ENCODE measurements at regions of chr1 and their contacts with region 1.

Region 1: GRCh38 chr1:19485362-19486187 is at the start of gene CAPZB:
- DNase-seq: peak; percentile 87
- H3K4me3 Mint-ChIP-seq: peak within 1 kb of the TSS; percentile 96
- H3K27ac Mint-ChIP-seq: peak within 1 kb of the TSS; percentile 89
- H3K4me1 Mint-ChIP-seq: peaks cover 54% of the 10 kb centered on the region
- H3K27me3 Mint-ChIP-seq: no peaks in the 10 kb centered on the region
- total RNA-seq, gene CAPZB: 329 and 336 TPM in 2 replicates

Region 2: GRCh38 chr1:19390901-19391595 is 94.5 kb before region 1 on chr1:
- intact Hi-C with region 1: loop called (anchors 2 kb)
- DNase-seq: peak; percentile 67
- H3K4me3 Mint-ChIP-seq: peak overlapping the region; percentile 69
- H3K27ac Mint-ChIP-seq: peak overlapping the region; percentile 91
- H3K4me1 Mint-ChIP-seq: peaks cover 57% of the 10 kb centered on the region
- H3K27me3 Mint-ChIP-seq: no peaks in the 10 kb centered on the region

Region 3: GRCh38 chr1:19448491-19449439 is 36.8 kb before region 1 on chr1:
- intact Hi-C with region 1: loop called (anchors 5 kb)
- DNase-seq: no peak
- H3K4me3 Mint-ChIP-seq: no peak overlapping the region
- H3K27ac Mint-ChIP-seq: peak overlapping the region; percentile 85
- H3K4me1 Mint-ChIP-seq: peaks cover 64% of the 10 kb centered on the region
- H3K27me3 Mint-ChIP-seq: no peaks in the 10 kb centered on the region

Region 4: GRCh38 chr1:19468397-19468956 is 17.1 kb before region 1 on chr1:
- intact Hi-C with region 1: loop called (anchors 2 kb)
- DNase-seq: peak; percentile 58
- H3K4me3 Mint-ChIP-seq: peak overlapping the region; percentile 52
- H3K27ac Mint-ChIP-seq: peak overlapping the region; percentile 90
- H3K4me1 Mint-ChIP-seq: peaks cover 82% of the 10 kb centered on the region
- H3K27me3 Mint-ChIP-seq: no peaks in the 10 kb centered on the region

Region 5: GRCh38 chr1:19582302-19582701 is 96.7 kb after region 1 on chr1:
- intact Hi-C with region 1: loop called (anchors 1 kb)
- DNase-seq: peak; percentile 63
- H3K4me3 Mint-ChIP-seq: no peak overlapping the region
- H3K27ac Mint-ChIP-seq: no peak overlapping the region
- H3K4me1 Mint-ChIP-seq: peaks cover 11% of the 10 kb centered on the region
- H3K27me3 Mint-ChIP-seq: peaks cover 8% of the 10 kb centered on the region

Region 6: DNA sequence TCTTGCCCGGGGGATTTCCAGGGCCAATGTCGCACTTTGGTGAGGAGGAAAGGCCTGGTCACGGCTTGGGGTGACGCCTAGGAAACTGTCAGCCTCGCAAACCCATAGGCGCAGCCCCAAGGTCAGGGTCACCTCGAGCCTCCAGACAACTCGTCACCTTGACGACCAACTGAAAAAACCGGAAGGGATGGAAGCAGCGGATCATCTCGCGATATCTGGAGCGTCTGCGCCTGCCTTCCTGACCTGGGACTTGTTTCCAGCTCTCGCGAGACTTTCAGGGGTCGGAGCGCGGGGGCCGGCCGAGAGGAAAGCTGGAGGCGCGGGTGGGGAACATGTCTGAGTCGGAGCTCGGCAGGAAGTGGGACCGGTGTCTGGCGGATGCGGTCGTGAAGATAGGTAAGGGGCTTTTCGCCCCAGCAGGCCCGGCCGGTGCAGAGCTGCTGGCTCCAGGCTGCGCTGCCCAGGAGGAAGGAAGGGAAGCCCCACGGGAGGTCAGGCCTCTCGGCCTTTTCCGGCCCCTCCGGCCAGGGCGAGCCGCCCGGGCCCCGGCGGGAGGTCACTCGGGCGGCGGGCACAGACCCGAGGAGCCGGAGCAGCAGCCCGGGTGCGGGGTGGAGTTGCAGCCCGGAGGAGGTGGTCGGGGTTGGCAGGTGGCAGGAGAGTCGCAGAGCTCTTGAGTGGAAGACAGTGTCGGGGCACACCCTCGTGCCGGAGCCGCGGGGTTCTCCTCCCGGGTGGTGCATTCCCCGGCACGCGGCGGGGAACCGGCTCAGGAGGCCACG is 111.3 kb after region 1 on chr1:
- intact Hi-C with region 1: loop called (anchors 2 kb)
- DNase-seq: peak; percentile 97
- H3K4me3 Mint-ChIP-seq: peak overlapping the region; percentile 98
- H3K27ac Mint-ChIP-seq: peak overlapping the region; percentile 99
- H3K4me1 Mint-ChIP-seq: peaks cover 37% of the 10 kb centered on the region
- H3K27me3 Mint-ChIP-seq: peaks cover 3% of the 10 kb centered on the region

Region 7: DNA sequence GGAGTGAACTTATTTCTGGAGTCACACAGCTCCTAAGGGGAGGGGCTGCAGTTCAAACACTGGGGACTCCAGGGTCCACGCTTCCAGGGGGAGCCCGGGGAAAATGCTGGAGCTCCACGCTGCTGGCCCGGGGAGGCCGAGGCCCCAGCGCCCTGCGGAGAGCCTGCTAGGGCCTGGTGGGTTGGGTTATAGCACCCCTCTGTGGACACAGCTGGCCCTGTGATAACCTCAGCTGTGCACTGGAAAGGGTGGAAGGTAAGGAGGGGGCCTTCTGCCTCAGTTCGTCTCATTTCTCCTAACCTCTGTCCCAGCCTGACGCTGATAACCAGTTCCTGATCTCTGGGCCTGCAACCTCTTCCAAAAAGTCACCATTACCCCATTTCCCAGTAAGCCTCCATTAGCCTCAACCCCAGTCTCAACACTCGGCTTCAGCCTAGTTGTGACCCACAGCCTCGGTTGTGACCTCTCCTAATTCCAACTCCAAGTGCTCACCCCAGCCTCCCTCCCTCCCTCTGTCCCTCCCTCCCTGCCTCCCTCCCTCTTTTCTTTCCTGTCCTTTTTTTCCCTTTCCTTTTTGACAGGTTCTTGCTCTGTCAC is 165.7 kb after region 1 on chr1:
- intact Hi-C with region 1: loop called (anchors 5 kb)
- DNase-seq: peak; percentile 41
- H3K4me3 Mint-ChIP-seq: no peak overlapping the region
- H3K27ac Mint-ChIP-seq: no peak overlapping the region
- H3K4me1 Mint-ChIP-seq: peaks cover 25% of the 10 kb centered on the region
- H3K27me3 Mint-ChIP-seq: no peaks in the 10 kb centered on the region

Measured in activated T-helper 2 cell treated with anti-CD3 and anti-CD28 coated beads, Interferon-gamma antibody, Interleukin-2, Interleukin-4, amounts not matched to agents 10 μg/mL and 5 μg/mL and 100 μg/mL, durations not matched to agents 14 hours and 24 hours and 36 hours (primary cell).